ENCODE measurements at regions of chr1 and their contacts with region 1.

Region 1: GRCh38 chr1:203769505-203770343 is 4.7 kb downstream of the LAX1 start:
- DNase-seq: peak in 1 of 9 experiments; percentile 51
- ATAC-seq: no peak
- H3K4me3 ChIP-seq: no peak overlapping the region
- H3K4me3 Mint-ChIP-seq: no peak overlapping the region
- H3K27ac ChIP-seq: peak overlapping the region in 1 of 2 experiments; percentile 50
- H3K27ac Mint-ChIP-seq: peak overlapping the region; percentile 83
- H3K4me1 ChIP-seq: peaks cover 21% of the 10 kb centered on the region
- H3K4me1 Mint-ChIP-seq: peaks cover 50% of the 10 kb centered on the region
- H3K27me3 ChIP-seq: no peaks in the 10 kb centered on the region
- H3K27me3 Mint-ChIP-seq: no peaks in the 10 kb centered on the region
- CTCF ChIP-seq: no peak

Region 2: DNA sequence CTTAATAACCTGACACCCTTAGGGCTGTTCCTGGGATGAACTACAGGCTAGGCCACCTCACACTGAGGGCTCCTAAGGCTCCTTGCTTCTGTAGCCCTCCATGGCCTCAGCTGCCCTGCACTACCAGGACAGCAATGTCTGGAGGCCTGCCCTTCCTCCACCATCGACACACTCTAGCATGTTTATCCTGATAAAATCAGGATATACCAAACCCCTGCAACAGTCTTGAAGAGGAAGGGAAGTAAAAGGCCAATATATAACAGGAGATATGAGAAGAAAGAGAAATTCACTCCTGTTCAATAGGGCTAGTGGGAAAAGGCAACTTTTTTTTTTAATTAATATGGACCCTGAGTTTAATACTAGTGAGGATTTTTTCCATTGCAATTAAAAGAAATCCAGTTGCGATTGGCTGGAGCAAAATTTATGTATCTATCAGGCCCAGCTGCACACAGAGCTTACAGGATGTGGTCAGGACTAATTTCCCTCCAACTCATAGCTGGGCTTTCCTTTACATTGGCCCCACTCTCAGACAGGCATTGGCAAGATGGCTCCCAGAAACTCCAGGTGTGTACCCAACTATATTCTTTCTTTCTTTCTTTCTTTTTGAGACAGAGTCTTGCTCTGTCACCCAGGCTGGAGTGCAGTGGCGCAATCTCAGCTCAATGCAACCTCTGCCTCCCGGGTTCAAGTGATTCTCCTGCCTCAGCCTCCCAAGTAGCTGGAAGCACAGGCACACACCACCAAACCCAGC is 156.6 kb before region 1 on chr1:
- CTCF ChIA-PET with region 1: no interaction called
- POLR2A ChIA-PET with region 1: no interaction called
- intact Hi-C with region 1: loop called (anchors 5 kb)
- DNase-seq: peak in 2 of 9 experiments; percentile 37 to 57
- ATAC-seq: peak; percentile 49
- H3K4me3 ChIP-seq: no peak overlapping the region
- H3K4me3 Mint-ChIP-seq: no peak overlapping the region
- H3K27ac ChIP-seq: no peak overlapping the region
- H3K27ac Mint-ChIP-seq: no peak overlapping the region
- H3K4me1 ChIP-seq: peaks cover 10% of the 10 kb centered on the region
- H3K4me1 Mint-ChIP-seq: peaks cover 30% of the 10 kb centered on the region
- H3K27me3 ChIP-seq: no peaks in the 10 kb centered on the region
- H3K27me3 Mint-ChIP-seq: no peaks in the 10 kb centered on the region
- CTCF ChIP-seq: no peak

Region 3: DNA sequence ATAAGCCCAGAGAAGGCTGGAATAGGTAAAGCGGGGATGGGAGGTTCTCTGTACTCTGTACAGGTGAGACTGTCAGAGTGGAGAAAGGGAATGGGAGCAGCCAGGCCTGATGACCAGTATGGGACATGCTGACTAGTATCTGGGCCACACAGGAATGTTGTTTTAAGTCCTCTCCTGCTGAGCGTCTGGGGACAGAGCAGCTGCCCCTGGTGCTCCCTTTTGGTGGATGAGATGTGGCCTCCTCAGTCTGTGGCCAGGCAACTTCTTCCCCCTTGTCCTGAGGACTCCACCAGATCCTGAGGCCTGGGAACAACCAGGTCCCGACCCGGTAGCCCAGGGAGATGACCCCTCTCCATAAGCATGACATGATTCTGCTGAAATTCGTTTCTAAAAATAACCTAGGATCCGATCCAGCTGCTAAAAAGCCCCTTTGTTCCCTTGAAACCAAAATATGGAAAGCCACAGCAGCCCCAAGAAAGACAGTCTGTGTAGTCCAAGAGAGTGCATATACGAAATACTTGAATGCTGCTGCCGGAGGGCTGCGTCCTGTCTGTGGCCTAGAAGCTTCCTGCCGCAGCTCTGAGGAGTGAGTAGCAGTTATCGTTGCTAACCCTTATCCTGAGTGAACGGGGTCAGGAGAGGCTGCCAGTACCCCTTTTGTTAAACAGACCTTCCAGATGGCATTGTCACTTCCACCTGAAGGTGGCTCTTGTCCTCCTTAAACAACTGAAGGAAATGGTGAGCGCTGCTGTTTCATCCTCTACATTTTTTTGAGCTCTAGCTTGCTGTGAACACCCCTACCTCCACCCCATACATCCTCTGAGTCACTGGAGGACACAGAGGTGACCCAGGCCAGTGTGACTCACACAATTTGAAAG is 95.9 kb before region 1 on chr1:
- CTCF ChIA-PET with region 1: interaction called, 3 read pairs
- POLR2A ChIA-PET with region 1: no interaction called
- intact Hi-C with region 1: loop called in 1 of 2 experiments (anchors 10 kb)
- DNase-seq: peak; percentile 43 to 94 (median 70)
- ATAC-seq: peak; percentile 88
- H3K4me3 ChIP-seq: no peak overlapping the region
- H3K4me3 Mint-ChIP-seq: peak overlapping the region; percentile 56
- H3K27ac ChIP-seq: peak overlapping the region; percentile 11 to 78
- H3K27ac Mint-ChIP-seq: peak overlapping the region; percentile 98
- H3K4me1 ChIP-seq: peaks cover 48% of the 10 kb centered on the region
- H3K4me1 Mint-ChIP-seq: peaks cover 66% of the 10 kb centered on the region
- H3K27me3 ChIP-seq: no peaks in the 10 kb centered on the region
- H3K27me3 Mint-ChIP-seq: no peaks in the 10 kb centered on the region
- CTCF ChIP-seq: peak; percentile 41

Region 4: DNA sequence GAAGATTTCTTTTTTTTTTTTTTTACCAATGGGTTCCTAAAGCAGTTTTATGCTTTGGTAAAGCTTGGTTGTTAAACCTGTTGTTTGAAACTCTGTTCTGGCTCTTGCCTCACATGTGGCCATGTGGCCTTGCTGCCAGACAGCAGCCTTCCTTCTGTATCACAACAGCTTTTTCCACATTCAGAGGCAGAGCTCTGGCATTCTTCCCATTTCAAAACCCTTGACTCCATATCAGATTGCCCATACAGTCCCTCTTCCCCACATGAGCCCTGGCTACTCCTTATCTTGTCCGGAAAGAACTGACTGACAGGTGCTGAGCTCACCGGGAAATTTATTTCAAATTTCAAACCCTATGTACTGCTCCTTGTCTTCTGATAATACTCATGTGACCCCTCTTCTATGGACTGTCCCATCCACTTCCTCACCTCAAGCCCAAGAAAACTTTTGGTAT is 43.3 kb before region 1 on chr1:
- CTCF ChIA-PET with region 1: no interaction called
- POLR2A ChIA-PET with region 1: interaction called, 3 read pairs
- intact Hi-C with region 1: loop called (anchors 5 to 10 kb)
- DNase-seq: no peak
- ATAC-seq: no peak
- H3K4me3 ChIP-seq: no peak overlapping the region
- H3K4me3 Mint-ChIP-seq: no peak overlapping the region
- H3K27ac ChIP-seq: no peak overlapping the region
- H3K27ac Mint-ChIP-seq: no peak overlapping the region
- H3K4me1 ChIP-seq: no peaks in the 10 kb centered on the region
- H3K4me1 Mint-ChIP-seq: no peaks in the 10 kb centered on the region
- H3K27me3 ChIP-seq: no peaks in the 10 kb centered on the region
- H3K27me3 Mint-ChIP-seq: no peaks in the 10 kb centered on the region
- CTCF ChIP-seq: no peak

Region 5: GRCh38 chr1:203744075-203744972 is 25.4 kb before region 1 on chr1:
- CTCF ChIA-PET with region 1: interaction called, 4 read pairs
- POLR2A ChIA-PET with region 1: interaction called, 21 read pairs
- intact Hi-C with region 1: loop called in 1 of 2 experiments (anchors 2 kb)
- DNase-seq: peak in 5 of 9 experiments; percentile 16 to 78 (median 48)
- ATAC-seq: peak; percentile 89
- H3K4me3 ChIP-seq: no peak overlapping the region
- H3K4me3 Mint-ChIP-seq: peak overlapping the region; percentile 61
- H3K27ac ChIP-seq: peak overlapping the region; percentile 13 to 54
- H3K27ac Mint-ChIP-seq: peak overlapping the region; percentile 89
- H3K4me1 ChIP-seq: peaks cover 11% of the 10 kb centered on the region
- H3K4me1 Mint-ChIP-seq: peaks cover 22% of the 10 kb centered on the region
- H3K27me3 ChIP-seq: no peaks in the 10 kb centered on the region
- H3K27me3 Mint-ChIP-seq: no peaks in the 10 kb centered on the region
- CTCF ChIP-seq: no peak

Region 6: DNA sequence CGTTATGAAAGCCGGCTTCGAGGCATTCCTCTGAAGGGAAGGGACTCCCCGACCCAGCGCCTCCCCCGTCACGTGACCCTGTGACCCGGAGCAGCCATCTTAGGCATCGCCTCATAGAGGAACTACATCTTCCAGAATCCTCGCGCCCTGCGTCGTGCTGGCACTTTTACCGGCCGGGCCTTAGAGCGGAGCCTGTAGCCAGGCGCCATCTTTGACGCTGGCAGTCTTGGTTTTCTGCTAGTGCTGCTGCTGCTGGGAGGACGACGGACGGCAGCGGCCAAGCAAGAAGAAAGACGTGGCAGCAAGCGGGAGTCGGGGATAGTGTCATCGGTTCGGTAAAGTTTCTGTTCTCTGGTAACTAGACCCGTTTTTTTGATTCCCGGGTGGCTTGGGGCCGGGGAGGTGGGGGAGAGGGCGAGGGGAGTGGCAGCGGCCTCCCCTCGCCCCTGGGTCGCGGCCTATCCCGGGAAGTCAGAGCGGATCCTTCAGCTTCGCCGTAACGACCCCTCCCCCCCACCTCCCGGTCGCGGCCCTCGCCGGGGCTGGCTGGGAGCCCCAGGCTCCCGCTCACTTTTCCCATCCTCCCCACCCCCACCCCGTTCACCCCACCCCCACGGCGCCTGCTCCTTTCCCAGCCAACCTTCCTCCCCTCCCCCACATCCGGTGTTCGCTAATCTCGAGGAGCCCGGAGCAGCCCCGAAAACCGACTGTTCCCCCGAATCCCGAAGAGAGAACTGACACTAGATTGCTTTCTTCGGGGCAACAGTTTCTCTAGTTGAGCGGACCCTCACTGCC is 25.9 kb after region 1 on chr1 and contains the starts of genes ZBED6 and ZC3H11A:
- CTCF ChIA-PET with region 1: no interaction called
- POLR2A ChIA-PET with region 1: interaction called, 4 read pairs
- intact Hi-C with region 1: loop called (anchors 1 kb)
- DNase-seq: peak; percentile 96 to 100 (median 97)
- ATAC-seq: peak; percentile 96
- H3K4me3 ChIP-seq: peak within 1 kb of the TSS; percentile 67 to 73
- H3K4me3 Mint-ChIP-seq: peak within 1 kb of the TSS; percentile 96
- H3K27ac ChIP-seq: peak within 1 kb of the TSS; percentile 54 to 92
- H3K27ac Mint-ChIP-seq: peak within 1 kb of the TSS; percentile 97
- H3K4me1 ChIP-seq: peaks cover 42% of the 10 kb centered on the region
- H3K4me1 Mint-ChIP-seq: peaks cover 53% of the 10 kb centered on the region
- H3K27me3 ChIP-seq: no peaks in the 10 kb centered on the region
- H3K27me3 Mint-ChIP-seq: no peaks in the 10 kb centered on the region
- CTCF ChIP-seq: no peak
- total RNA-seq, gene ZBED6: 25.0 to 25.8 TPM
- total RNA-seq, gene ZC3H11A: 72.7 to 77.2 TPM

Measured in CD8-positive, alpha-beta T cell (primary cell).